G401 (cell line): ENCODE measurements at regions of chr2 and their contacts with region 1.

Region 1: DNA sequence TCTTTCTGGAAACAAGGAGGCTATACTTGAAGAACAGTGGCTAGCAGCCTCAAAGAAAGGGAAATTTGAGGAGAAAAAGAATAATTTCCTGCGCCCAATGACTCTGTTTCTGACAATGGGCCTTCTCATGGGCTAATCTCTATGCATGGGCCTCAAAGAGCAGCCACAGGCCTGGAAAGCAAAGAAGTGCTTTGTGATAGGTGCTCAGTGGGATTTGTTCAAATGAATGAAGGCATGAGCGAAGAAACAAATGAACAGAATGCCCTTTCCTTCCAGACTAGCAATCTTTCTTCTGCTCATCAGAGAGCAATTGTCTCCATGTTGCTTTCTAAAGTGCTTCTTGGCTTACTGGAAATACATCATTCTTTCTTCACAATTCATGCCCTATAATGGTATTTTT is 253.0 kb downstream of the MTX2 start:
- DNase-seq: no peak

Region 2: GRCh38 chr2:176317199-176317598 is 205.1 kb before region 1 on chr2:
- in situ Hi-C with region 1: no loop called
- DNase-seq: no peak

Region 3: DNA sequence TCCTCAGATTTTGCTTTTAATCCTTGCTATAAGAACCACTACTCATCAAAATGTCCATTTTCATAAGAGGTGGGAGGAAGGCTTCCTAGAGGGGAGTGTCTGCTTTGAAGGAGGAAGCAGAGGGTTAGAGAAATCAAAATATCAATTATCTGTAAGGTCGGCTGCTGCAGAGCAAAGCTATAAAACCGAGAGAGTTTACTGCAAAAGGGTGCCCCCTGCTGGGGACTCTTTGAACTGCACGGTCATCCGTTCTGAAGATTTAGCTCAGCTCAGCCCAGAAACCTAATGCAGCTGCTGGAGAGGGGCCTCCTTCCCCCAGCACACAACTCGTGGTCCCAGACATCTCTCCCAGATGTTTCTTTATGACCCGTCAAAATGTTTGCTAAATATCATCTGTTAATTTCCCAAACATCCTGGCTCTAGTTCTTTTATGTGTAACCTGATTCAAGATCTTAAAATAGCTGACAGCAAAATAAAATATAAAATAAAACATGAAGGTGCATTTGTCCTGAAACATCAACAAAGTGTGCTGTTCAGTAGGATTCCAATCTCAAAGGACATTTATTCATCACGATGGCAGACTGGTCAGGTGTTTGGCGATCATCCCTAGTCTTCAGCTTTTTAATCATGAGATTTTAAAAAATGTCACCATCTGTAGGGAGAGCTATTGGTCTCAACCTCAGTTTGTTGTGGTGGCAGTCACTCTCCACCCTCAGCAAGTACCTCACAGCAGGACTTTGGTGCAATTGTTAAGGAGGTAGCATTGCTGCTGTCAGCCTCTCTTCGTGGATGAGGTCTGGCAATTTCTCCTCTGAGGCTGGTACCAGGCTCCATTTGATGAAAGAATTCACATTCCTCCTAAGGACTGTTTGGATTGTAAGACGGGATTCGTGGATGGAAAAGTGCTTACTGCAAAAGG is 67.1 kb before region 1 on chr2:
- in situ Hi-C with region 1: no loop called
- DNase-seq: peak; percentile 65

Region 4: GRCh38 chr2:176479961-176480360 is 42.3 kb before region 1 on chr2:
- in situ Hi-C with region 1: loop called (anchors 5 kb)
- DNase-seq: no peak

Region 5: GRCh38 chr2:176491172-176491904 is 30.9 kb before region 1 on chr2:
- in situ Hi-C with region 1: no loop called
- DNase-seq: no peak

Region 6: DNA sequence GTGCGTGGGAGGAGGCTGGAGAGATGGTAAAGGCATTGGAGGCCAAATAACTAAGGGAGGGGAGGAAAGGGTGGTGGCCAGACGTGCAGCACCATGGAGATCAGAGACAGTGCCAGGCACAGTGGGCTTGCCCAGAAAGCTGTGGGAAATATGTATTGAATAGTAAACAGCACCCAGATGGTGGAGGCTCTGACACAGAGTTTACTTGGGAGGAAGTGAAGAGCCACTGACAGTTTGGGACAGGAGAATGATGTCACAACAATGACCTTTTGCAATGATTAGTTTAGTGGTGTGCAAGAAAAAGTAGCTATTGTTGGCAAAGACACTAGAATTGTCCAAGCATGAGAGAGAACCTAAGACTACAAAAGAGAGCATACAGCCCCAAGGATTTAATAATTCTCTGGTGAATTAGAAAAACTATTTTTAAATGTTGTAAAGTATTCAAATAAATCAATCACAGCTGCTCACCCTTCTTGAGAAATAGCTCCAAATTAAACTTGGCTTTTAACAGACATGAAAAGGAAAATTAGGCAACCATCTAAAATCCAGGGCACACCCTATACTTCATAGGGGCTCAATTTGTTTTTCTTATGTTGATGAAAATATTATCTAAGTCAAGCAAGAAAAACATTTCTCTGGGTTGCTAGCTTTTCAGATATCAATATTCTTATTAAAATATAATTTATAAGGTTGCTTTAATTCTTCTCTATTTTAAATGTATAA is 231.6 kb after region 1 on chr2:
- in situ Hi-C with region 1: no loop called
- DNase-seq: no peak